SK-MEL-5 (cell line): ENCODE measurements at regions of chr12 and their contacts with region 1.

Region 1: GRCh38 chr12:123912415-123913380 is 59.9 kb downstream of the CCDC92 start:
- DNase-seq: peak; percentile 42

Region 2: GRCh38 chr12:123478762-123479161 is 433.9 kb before region 1 on chr12:
- in situ Hi-C with region 1: no loop called
- DNase-seq: peak; percentile 74

Region 3: GRCh38 chr12:123966596-123966995 is 53.9 kb after region 1 on chr12:
- in situ Hi-C with region 1: loop called (anchors 10 kb)
- DNase-seq: no peak

Region 4: GRCh38 chr12:124321040-124321481 is 408.4 kb after region 1 on chr12:
- in situ Hi-C with region 1: no loop called
- DNase-seq: peak; percentile 73